Motor neuron (in vitro differentiated cells): ENCODE measurements at regions of chr11 and their contacts with region 1.

Region 1: DNA sequence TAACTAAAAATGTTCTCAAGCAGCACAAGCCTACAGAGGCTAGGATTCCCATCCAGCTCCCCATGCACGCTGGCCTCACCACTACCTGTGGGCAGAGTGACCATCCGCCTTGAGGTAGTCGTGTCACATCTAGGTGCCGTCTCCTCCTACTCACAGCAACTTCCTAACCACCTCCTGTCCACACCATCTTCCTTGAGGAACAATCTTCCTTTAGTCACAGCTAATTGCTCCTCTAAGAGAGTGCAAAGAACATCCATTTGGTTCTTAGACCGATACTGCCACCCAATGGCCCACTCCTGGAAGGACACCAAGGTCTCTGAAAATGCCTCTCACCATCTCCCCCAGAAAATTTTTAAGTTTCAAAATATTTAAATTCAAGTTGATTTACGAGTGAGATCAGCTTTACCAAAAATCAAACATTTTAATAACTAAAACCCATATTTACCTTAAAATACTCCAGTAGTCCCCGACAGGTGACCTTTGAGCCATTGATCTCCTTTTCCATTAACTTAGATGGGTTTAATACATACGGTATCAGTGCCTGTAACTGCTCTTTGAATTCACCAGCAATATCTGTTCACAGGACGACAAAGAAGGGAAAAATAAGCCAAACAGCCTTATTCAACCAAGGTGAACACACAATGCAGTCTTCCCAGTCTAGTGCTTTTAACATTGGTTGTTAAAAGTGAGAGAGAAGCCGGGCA is 21.7 kb upstream of the PLAAT3 start:
- ATAC-seq: peak; percentile 71 to 89 (median 76)
- H3K4me3 ChIP-seq: no peak overlapping the region
- H3K27ac ChIP-seq: no peak overlapping the region
- H3K4me1 ChIP-seq: no peaks in the 10 kb centered on the region

Region 2: GRCh38 chr11:63042596-63042995 is 593.3 kb before region 1 on chr11:
- in situ Hi-C with region 1: loop called in 1 of 9 experiments (anchors 25 kb)
- ATAC-seq: no peak
- H3K4me3 ChIP-seq: no peak overlapping the region
- H3K27ac ChIP-seq: no peak overlapping the region
- H3K4me1 ChIP-seq: no peaks in the 10 kb centered on the region

Region 3: DNA sequence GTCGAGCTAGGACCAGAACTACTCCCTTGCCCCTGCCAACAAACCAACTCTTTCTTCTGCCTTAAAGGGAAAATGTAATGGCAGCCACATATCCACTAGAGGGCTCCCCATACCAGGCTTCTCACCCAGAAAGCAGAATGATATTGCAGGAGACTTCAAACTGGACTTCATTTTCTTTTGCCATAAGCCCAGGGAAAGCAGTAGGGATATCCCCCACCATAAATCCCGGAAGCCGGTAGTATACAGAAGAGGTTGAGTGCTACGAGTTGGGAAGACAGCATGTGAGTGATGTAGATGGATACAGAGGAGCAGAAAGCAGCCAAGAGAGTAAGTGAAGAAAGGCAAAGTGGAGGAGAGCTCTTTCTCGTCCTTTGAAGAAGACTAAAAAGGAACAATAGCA is 157.0 kb before region 1 on chr11:
- in situ Hi-C with region 1: loop called in 8 of 9 experiments (anchors 5 to 25 kb)
- ATAC-seq: peak; percentile 88 to 96 (median 93)
- H3K4me3 ChIP-seq: no peak overlapping the region
- H3K27ac ChIP-seq: no peak overlapping the region
- H3K4me1 ChIP-seq: no peaks in the 10 kb centered on the region

Region 4: GRCh38 chr11:63489879-63490278 is 146.0 kb before region 1 on chr11:
- in situ Hi-C with region 1: loop called in 3 of 9 experiments (anchors 10 to 25 kb)
- ATAC-seq: peak in 7 of 8 experiments; percentile 7 to 63 (median 47)
- H3K4me3 ChIP-seq: no peak overlapping the region
- H3K27ac ChIP-seq: no peak overlapping the region
- H3K4me1 ChIP-seq: peaks cover 7 to 8% of the 10 kb centered on the region in 2 donors

Region 5: DNA sequence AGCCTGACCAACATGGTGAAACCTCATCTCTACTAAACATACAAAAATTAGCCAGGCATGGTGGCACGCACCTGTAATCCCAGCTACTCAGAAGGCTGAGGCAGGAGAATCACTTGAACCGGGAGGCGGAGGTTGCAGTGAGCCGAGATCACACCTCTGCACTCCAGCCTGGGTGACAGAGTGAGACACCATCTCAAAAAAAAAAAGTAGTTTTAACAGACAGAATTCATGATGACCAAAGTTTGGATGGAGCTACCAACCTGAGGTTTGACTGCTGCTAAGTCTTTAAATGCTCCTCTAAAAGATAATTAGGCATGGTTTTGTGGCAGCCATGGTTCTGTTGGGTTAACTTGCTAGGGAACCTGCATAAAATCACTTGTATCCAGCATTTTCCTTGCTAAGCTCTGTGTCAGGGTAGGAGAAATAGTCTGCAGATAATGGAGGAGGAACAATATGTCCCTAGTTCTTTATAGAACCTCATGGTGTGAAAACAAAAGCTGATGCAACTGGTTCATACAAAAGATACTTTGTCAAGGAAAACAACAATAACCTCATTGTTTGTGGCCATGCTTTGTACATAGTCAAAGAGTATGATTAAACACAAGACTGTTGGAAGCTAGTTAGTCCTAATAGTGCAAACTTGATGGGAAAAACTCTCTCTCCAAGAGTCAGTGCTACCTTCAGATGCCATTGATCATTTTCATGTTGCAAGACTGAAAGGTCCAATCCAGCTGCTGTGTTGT is 52.8 kb before region 1 on chr11:
- in situ Hi-C with region 1: no loop called
- ATAC-seq: peak in 5 of 8 experiments; percentile 49 to 81 (median 60)
- H3K4me3 ChIP-seq: no peak overlapping the region
- H3K27ac ChIP-seq: peak overlapping the region; percentile 44 to 72
- H3K4me1 ChIP-seq: peaks cover 3 to 7% of the 10 kb centered on the region in 2 donors

Region 6: DNA sequence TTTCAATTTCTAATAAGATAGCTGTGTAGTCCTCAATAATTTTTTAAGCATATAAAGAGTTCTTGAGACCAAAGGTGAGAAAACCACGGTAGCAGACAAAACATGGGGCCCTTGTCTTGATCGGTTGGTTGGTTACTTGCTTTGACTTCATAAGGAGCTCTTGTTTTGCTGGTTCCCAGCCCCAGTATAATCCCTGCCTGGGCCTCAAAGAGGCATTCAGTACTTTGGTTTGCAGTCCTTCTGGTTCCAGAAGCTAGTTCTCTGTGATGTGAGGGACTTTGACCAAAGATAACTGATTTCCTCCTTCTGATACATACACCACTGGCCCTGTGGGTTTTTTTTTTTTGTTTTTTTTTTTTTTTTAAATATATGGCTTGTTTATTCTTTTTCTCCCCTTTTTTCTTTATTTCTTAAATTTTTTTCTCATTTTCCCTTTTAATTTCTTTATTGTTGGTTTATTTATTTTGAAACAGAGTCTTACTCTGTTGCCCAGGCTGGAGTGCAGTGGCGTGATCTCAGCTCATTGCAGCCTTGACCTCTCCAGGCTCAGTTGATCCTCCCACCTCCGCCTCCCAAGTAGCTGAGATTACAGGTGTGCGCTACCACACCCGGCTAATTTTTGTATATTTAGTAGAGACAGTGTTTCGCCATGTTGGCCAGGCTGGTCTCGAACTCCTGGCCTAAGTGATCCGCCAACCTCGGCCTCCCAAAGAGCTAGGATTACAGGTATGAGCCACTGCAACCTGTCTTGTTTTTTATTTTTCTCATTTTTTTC is 220.2 kb after region 1 on chr11:
- in situ Hi-C with region 1: no loop called
- ATAC-seq: no peak
- H3K4me3 ChIP-seq: no peak overlapping the region
- H3K27ac ChIP-seq: no peak overlapping the region
- H3K4me1 ChIP-seq: peaks cover 0 to 7% of the 10 kb centered on the region in 2 donors

Region 7: DNA sequence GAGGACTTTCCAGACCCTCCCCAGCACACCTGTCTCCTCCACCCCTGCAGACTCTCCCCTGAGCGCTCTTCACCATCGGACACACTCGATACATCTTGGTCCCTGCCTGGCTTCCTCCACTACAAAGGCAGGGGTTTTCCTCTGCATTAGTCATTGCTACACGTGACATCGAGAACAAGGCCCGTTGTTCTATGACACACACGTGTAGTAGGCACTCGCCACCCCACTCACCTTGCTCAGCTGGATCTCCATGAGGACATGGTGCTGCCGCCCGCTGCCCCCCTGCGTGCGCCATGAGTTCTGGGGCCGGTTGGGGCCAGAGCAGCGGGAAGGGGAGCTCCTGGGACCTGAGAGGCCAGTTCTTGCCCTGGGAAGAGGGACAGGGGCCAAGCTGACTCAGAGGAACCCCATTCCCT is 1264.4 kb after region 1 on chr11:
- in situ Hi-C with region 1: no loop called
- ATAC-seq: no peak
- H3K4me3 ChIP-seq: no peak overlapping the region
- H3K27ac ChIP-seq: no peak overlapping the region
- H3K4me1 ChIP-seq: no peaks in the 10 kb centered on the region